ENCODE measurements at regions of chr14 and their contacts with region 1.

Region 1: GRCh38 chr14:96858643-96859042 is 61.5 kb downstream of the VRK1 start:
- DNase-seq: no peak
- ATAC-seq: no peak

Region 2: DNA sequence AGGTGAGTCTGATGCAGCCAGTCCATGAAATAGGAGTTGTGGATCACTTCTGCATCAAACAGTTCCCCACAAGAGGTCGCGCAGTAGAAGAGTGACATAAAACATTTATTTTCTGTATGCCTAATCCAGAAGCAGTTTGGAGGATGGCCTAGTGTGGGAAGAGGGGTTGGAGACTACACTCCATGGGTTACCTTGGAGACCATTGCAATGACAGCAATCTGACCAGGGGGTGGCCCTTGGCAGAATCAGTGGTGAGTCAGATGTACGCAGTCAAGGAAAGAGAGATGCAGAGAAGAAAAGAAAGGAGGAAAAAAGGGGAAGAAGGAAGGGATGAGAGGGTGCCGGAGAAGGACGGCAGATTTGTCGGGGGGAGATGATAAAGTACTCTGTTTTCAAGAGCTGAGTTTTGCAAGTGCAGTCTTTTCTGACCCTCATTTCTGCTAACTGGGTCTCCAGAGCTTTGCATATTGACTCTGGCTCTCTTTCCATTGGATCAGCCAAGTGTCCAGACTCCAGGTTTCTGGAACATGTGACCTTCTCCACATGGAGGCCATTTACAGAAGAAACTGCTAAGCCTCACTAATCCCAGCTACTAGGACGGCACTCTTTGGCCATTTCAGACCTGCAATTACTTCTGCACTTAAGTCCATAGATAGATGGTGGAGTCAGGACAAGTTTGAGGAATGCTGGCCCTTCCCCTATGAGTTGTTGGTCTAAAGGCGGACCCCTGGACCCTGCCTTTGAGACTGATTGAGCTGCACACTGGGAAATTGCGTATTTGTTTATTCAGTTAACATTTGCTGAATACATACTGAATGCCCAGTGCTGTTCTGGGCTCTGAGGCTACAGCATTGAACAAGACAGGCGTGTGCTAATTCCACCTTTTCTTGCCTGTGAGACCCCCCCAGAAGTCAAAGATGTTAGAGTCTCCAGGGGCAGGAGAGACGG is 1989.2 kb after region 1 on chr14:
- intact Hi-C with region 1: loop called (anchors 5 kb)
- DNase-seq: no peak
- ATAC-seq: peak; percentile 92